ENCODE measurements at regions of chr12 and their contacts with region 1.

Region 1: GRCh38 chr12:109995686-109996482 is at the start of gene GIT2:
- DNase-seq: peak; percentile 88 to 95 (median 93)
- ATAC-seq: peak; percentile 81
- H3K4me3 ChIP-seq: peak within 1 kb of the TSS; percentile 86
- H3K4me3 Mint-ChIP-seq: peak within 1 kb of the TSS; percentile 90 to 100 (median 96)
- H3K27ac ChIP-seq: peak within 1 kb of the TSS; percentile 84
- H3K27ac Mint-ChIP-seq: peak within 1 kb of the TSS; percentile 84 to 100 (median 96)
- H3K4me1 ChIP-seq: peaks cover 22 to 33% of the 10 kb centered on the region in 2 donors
- H3K4me1 Mint-ChIP-seq: peaks cover 42 to 77% (median 66%) of the 10 kb centered on the region in 7 donors
- H3K27me3 ChIP-seq: no peaks in the 10 kb centered on the region
- H3K27me3 Mint-ChIP-seq: no peaks in the 10 kb centered on the region
- total RNA-seq, gene GIT2: 70.3 to 128 (median 109) TPM

Region 2: DNA sequence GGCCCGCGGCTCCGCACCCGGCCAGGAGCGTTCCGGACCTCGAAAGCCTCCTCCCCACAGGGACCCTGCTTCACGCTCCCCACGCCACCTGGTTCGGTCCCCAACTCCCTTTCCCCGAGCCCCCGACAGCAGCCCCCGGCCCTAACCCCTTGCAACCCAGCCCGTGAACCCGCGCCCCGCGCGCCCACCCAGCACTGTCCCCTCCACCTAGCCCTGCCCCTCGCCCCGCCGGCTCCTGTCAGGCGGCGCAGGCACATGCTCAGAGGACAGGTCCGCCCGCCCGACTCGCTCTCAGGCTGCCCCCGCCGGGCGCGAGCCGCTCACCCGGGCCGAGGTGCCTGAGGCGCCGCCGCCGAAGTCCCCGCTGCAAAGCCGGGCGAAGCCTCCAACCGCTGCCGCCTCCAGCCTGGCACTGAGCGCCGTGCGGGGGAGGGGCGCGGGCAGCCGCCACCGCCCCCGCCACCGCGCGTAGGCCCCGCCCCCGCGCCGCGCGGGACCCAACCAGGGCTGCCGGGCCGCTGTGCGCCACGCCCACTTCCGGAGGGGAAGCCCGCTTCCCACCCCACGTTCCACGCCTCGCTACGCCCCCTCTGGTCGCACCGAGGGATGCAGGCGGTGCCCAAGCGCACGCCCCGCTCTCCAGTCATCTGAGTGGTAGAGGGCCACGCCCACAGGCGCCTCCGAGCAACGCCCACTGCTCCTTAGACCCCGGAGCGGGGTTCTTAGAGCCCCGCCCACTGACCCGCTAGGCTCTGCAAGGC is 1264.6 kb before region 1 on chr12 and contains the start of gene CORO1C:
- CTCF ChIA-PET with region 1: no interaction called
- POLR2A ChIA-PET with region 1: no interaction called
- intact Hi-C with region 1: loop called in 1 of 2 experiments (anchors 10 kb)
- DNase-seq: peak; percentile 90 to 99 (median 94)
- ATAC-seq: peak; percentile 88
- H3K4me3 ChIP-seq: peak within 1 kb of the TSS; percentile 99
- H3K4me3 Mint-ChIP-seq: peak within 1 kb of the TSS; percentile 94 to 99 (median 96)
- H3K27ac ChIP-seq: peak within 1 kb of the TSS; percentile 78
- H3K27ac Mint-ChIP-seq: peak within 1 kb of the TSS; percentile 79 to 98 (median 96)
- H3K4me1 ChIP-seq: peaks cover 4 to 6% of the 10 kb centered on the region in 2 donors
- H3K4me1 Mint-ChIP-seq: peaks cover 0 to 44% (median 19%) of the 10 kb centered on the region in 7 donors
- H3K27me3 ChIP-seq: no peaks in the 10 kb centered on the region
- H3K27me3 Mint-ChIP-seq: peaks cover 0 to 9% (median 0%) of the 10 kb centered on the region in 5 donors
- total RNA-seq, gene CORO1C: 7.6 to 71.8 (median 15.7) TPM

Region 3: GRCh38 chr12:109818905-109819500 is 176.9 kb before region 1 on chr12:
- CTCF ChIA-PET with region 1: no interaction called
- POLR2A ChIA-PET with region 1: no interaction called
- intact Hi-C with region 1: no loop called
- DNase-seq: no peak
- ATAC-seq: no peak
- H3K4me3 ChIP-seq: no peak overlapping the region
- H3K4me3 Mint-ChIP-seq: no peak overlapping the region
- H3K27ac ChIP-seq: no peak overlapping the region
- H3K27ac Mint-ChIP-seq: no peak overlapping the region
- H3K4me1 ChIP-seq: no peaks in the 10 kb centered on the region
- H3K4me1 Mint-ChIP-seq: peaks cover 0 to 1% (median 0%) of the 10 kb centered on the region in 7 donors
- H3K27me3 ChIP-seq: no peaks in the 10 kb centered on the region
- H3K27me3 Mint-ChIP-seq: peaks cover 0 to 16% (median 0%) of the 10 kb centered on the region in 5 donors

Region 4: DNA sequence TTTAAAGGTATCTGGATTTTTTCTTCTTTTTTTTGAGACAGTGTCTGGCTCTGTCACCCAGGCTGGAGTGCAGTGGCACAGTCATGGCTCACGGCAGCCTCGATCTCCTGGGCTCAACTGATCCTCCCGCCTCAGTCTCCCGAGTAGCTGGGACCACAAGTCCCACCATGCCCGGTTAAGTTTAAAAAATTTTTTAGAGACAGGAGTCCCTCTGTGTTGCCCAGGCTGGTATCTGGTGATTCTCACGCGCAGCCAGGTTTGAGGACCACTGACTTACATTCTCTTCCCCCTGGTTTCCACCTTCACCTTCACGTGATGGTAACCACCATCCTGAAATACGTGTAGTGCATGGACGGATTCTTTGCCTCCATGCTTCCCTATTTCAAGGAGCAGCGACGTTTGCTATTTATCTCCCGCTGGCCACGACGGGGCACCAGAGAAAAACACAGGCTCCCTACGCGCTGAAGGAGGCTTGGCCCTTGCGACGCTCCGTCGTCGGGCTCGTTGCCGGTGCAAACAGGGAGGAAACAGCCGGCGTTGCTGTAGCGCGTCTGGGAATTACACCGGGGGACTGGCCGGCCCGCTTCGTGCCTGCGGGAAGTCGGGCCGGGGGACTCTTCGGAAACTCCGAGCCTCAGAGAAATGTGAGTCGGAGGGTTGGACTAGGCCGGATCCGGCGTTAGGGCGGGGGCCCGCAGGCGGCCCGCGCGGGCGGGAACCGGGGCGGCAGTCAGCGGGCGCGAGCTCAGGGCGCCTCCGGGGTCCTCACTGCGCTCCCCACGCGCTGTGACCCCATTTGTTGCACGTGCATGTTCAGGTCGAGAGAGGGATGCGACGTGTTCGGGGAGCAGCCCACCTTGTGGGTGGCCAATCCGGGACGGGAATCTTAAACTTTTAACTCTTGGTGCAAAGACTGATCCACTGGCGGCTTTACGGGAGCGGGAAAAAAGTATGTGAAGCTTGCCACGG is 95.8 kb before region 1 on chr12 and contains the start of gene TCHP:
- CTCF ChIA-PET with region 1: no interaction called
- POLR2A ChIA-PET with region 1: interaction called, 5 read pairs
- intact Hi-C with region 1: loop called (anchors 2 to 5 kb)
- DNase-seq: peak; percentile 58 to 79 (median 75)
- ATAC-seq: peak; percentile 97
- H3K4me3 ChIP-seq: peak within 1 kb of the TSS; percentile 90
- H3K4me3 Mint-ChIP-seq: peak within 1 kb of the TSS; percentile 88 to 98 (median 93)
- H3K27ac ChIP-seq: peak within 1 kb of the TSS; percentile 74
- H3K27ac Mint-ChIP-seq: peak within 1 kb of the TSS; percentile 88 to 99 (median 93)
- H3K4me1 ChIP-seq: peaks cover 15 to 17% of the 10 kb centered on the region in 2 donors
- H3K4me1 Mint-ChIP-seq: peaks cover 17 to 33% (median 22%) of the 10 kb centered on the region in 7 donors
- H3K27me3 ChIP-seq: no peaks in the 10 kb centered on the region
- H3K27me3 Mint-ChIP-seq: no peaks in the 10 kb centered on the region
- total RNA-seq, gene TCHP: 21.7 to 40.0 (median 31.8) TPM

Region 5: DNA sequence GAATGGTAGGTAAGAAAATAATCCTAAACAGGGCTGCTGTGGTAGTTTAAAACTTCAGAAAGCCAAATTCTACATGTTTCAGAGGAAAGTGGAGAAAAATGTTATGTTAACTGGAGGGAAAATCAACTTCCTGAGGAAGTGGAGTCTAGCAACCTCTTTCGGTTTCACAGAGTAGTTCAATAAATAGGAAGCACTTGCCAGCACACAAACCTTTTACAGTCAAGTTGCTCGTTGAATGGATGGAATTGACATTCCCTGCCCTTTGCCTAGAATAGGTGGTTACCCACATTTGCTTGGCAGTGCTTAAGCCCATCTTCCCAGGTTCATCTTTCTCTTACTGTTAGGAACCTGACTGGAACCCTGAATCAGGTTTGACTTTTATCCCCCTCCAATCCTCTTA is 19.2 kb after region 1 on chr12:
- CTCF ChIA-PET with region 1: no interaction called
- POLR2A ChIA-PET with region 1: interaction called, 9 read pairs
- intact Hi-C with region 1: loop called (anchors 1 to 2 kb)
- DNase-seq: peak in 5 of 9 donors; percentile 20 to 53 (median 40)
- ATAC-seq: peak; percentile 66
- H3K4me3 ChIP-seq: no peak overlapping the region
- H3K4me3 Mint-ChIP-seq: peak overlapping the region in 7 of 10 donors; percentile 8 to 64 (median 55)
- H3K27ac ChIP-seq: peak overlapping the region; percentile 61
- H3K27ac Mint-ChIP-seq: peak overlapping the region; percentile 75 to 93 (median 85)
- H3K4me1 ChIP-seq: peaks cover 12 to 19% of the 10 kb centered on the region in 2 donors
- H3K4me1 Mint-ChIP-seq: peaks cover 15 to 42% (median 30%) of the 10 kb centered on the region in 7 donors
- H3K27me3 ChIP-seq: no peaks in the 10 kb centered on the region
- H3K27me3 Mint-ChIP-seq: no peaks in the 10 kb centered on the region

Region 6: DNA sequence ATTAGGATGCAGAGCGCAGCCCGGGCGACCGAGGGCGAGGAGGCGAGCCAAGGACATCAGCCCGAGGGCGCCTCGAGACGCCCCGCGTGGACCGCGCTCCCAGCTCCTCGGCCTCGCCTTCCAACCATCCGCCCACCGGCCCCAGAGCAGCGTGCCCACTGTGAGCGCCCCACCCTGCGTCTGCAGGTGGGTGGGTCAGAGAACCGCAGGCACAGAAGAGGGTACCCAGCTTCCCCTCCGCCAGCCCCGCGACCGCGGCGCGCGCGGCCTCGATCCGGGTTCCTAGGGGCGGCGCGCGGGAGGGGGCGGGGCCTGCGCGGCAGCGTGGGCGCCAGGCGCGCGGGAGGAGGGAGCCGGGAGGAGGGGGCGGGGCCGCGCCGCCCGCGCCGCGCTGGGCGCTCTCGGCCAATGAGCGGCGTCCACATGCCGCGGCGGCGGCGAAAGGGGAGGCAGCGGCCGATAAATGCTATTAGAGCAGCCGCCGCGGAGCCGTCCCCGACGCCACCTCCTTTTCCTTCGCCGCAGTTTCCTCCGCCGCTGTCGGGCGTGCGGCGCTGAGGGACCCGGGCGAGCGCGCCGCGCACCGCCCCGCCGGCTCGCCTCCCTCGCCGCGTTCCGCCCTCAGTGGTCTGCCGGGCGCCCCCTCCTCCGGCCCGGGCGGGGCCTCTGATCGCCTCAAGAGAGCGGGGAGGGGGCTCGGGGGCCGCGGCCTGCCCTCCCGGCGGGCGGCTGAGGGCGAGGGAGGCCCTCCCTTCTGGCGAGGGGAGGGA is 285.1 kb after region 1 on chr12 and contains the start of gene ATP2A2:
- CTCF ChIA-PET with region 1: no interaction called
- POLR2A ChIA-PET with region 1: interaction called, 3 read pairs
- intact Hi-C with region 1: loop called (anchors 1 to 5 kb)
- DNase-seq: peak; percentile 87 to 93 (median 91)
- ATAC-seq: peak; percentile 96
- H3K4me3 ChIP-seq: peak within 1 kb of the TSS; percentile 83
- H3K4me3 Mint-ChIP-seq: peak within 1 kb of the TSS; percentile 87 to 96 (median 93)
- H3K27ac ChIP-seq: peak within 1 kb of the TSS; percentile 92
- H3K27ac Mint-ChIP-seq: peak within 1 kb of the TSS; percentile 84 to 93 (median 89)
- H3K4me1 ChIP-seq: peaks cover 12 to 27% of the 10 kb centered on the region in 2 donors
- H3K4me1 Mint-ChIP-seq: peaks cover 39 to 50% (median 48%) of the 10 kb centered on the region in 7 donors
- H3K27me3 ChIP-seq: no peaks in the 10 kb centered on the region
- H3K27me3 Mint-ChIP-seq: peaks cover 0 to 11% (median 0%) of the 10 kb centered on the region in 5 donors
- total RNA-seq, gene ATP2A2: 81.4 to 160 (median 83.9) TPM

Region 7: GRCh38 chr12:110501752-110502738 is 506.2 kb after region 1 on chr12 and contains the starts of genes RAD9B and VPS29:
- CTCF ChIA-PET with region 1: no interaction called
- POLR2A ChIA-PET with region 1: no interaction called
- intact Hi-C with region 1: loop called in 1 of 2 experiments (anchors 5 kb)
- DNase-seq: peak; percentile 91 to 100 (median 99)
- ATAC-seq: peak; percentile 98
- H3K4me3 ChIP-seq: peak within 1 kb of the TSS; percentile 86
- H3K4me3 Mint-ChIP-seq: peak within 1 kb of the TSS; percentile 88 to 100 (median 97)
- H3K27ac ChIP-seq: peak within 1 kb of the TSS; percentile 89
- H3K27ac Mint-ChIP-seq: peak within 1 kb of the TSS; percentile 93 to 100 (median 97)
- H3K4me1 ChIP-seq: peaks cover 20 to 22% of the 10 kb centered on the region in 2 donors
- H3K4me1 Mint-ChIP-seq: peaks cover 22 to 52% (median 39%) of the 10 kb centered on the region in 7 donors
- H3K27me3 ChIP-seq: no peaks in the 10 kb centered on the region
- H3K27me3 Mint-ChIP-seq: peaks cover 0 to 3% (median 0%) of the 10 kb centered on the region in 5 donors
- total RNA-seq, gene RAD9B: 0.60 to 2.9 (median 1.1) TPM
- total RNA-seq, gene VPS29: 78.5 to 131 (median 115) TPM

Measured in naive thymus-derived CD4-positive, alpha-beta T cell (primary cell).